Heart right ventricle (tissue), 16 donors: ENCODE measurements at regions of chr1 and their contacts with region 1.

Region 1: GRCh38 chr1:33430692-33431593 is at the start of gene PHC2:
- DNase-seq: peak; percentile 97 to 98
- ATAC-seq: peak; percentile 96 to 98 (median 97)
- H3K4me3 ChIP-seq: peak within 1 kb of the TSS; percentile 69 to 95 (median 76)
- H3K27ac ChIP-seq: peak within 1 kb of the TSS; percentile 62 to 89 (median 86)
- H3K4me1 ChIP-seq: peaks cover 0 to 79% (median 50%) of the 10 kb centered on the region in 9 donors
- H3K27me3 ChIP-seq: no peaks in the 10 kb centered on the region
- CTCF ChIP-seq: peak in 8 of 9 donors; percentile 32 to 66 (median 42)
- total RNA-seq, gene PHC2: 96.7 to 136 (median 102) TPM

Region 2: DNA sequence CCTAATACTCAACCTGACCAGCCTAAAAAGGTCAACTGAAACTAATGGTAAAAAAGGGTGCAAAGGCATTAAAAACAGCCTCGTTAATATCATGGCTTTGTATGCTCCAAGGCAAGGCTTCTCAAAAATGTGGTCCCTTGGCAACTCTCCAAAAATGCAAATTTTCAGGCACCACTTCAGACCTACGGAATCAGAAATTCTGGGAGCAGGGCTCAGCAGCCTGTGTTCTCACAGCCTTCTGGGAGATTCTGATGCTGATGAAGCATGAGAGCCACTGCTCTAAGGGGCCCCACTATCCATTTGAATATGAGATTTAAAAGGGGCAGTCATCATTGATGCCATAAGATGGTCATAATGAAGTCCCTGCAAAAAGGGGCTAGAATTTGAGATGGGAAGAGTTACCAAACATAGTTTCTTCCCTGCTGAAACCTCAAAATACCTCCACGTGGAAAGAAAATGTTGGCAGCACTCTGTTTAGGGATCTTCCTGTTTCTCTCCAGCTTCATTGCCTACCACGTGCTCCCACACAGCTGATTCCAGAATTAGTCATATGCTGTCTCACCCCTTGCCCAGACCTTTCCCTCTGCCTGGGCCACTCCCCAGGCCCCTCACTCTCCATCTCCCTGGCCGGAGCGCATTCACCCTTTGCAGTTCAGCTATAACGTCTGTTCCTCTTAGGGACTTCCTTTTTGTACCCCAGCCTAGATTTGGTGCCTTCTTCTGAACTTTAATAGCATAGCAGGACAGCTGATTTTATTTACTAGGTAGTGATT is 46.7 kb before region 1 on chr1:
- intact Hi-C with region 1: loop called in 6 of 10 experiments (anchors 5 to 10 kb)
- DNase-seq: no peak
- ATAC-seq: peak in 5 of 8 donors; percentile 13 to 51 (median 38)
- H3K4me3 ChIP-seq: no peak overlapping the region
- H3K27ac ChIP-seq: peak overlapping the region in 8 of 10 donors; percentile 25 to 77 (median 73)
- H3K4me1 ChIP-seq: peaks cover 12 to 70% (median 49%) of the 10 kb centered on the region in 9 donors
- H3K27me3 ChIP-seq: no peaks in the 10 kb centered on the region
- CTCF ChIP-seq: no peak

Region 3: GRCh38 chr1:34696185-34696584 is 1265.2 kb after region 1 on chr1:
- intact Hi-C with region 1: no loop called
- DNase-seq: no peak
- ATAC-seq: no peak
- H3K4me3 ChIP-seq: no peak overlapping the region
- H3K27ac ChIP-seq: no peak overlapping the region
- H3K4me1 ChIP-seq: no peaks in the 10 kb centered on the region
- H3K27me3 ChIP-seq: peaks cover 0 to 25% (median 9%) of the 10 kb centered on the region in 7 donors
- CTCF ChIP-seq: no peak